ENCODE measurements at regions of chr17 and their contacts with region 1.

Region 1: DNA sequence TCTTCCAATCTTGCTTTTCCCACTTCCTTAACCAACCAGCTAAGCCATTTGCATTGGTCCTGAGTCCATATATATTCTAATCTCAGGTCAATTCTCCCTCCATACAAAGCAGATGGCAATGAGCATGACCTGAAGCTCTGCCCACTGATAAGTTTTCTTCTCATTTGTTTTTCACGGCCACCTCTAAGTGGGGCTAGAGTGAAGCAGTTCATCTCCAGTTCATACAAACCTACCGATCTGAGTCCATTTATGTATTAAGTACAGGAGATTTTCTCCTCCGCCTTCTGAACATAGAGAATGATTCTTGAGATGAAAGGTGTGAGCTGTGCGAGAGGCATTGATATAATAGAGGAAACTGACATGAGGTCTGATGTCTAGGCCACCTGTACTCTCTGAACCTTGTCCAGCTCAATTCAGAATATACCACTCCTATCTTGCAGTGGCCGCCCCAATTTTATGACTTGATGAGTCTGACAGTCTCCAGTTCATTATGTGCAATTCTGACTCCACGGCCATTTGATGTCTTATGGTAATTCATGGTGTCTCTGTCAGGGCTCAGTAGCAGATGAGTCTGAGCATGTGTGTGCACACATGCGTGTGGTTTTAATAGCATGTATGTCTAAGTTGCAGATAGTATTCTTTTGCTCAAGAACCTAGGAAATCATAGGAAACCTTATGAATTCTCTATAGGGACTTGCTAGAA is 329.8 kb downstream of the PMP22 start:
- DNase-seq: no peak
- ATAC-seq: no peak

Region 2: DNA sequence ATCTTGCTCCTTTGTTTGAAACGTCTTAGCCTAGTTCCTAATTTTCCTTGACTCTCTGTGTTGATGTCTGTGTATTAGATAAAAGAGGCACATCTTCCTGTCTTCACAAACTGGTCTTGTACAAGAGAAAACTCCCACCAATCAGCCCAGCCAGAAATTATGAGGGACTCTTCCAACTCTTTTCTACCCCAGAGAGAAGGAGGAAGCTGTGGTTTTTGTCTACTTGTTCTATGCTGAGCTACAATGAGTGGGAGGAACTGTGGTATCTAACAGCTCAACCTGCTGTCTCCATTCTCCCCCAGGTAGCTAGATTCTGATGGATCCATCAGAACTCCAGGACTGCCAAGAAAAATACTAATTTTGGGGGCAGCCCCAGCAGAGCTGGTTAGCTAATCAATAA is 241.9 kb before region 1 on chr17:
- intact Hi-C with region 1: no loop called
- DNase-seq: no peak
- ATAC-seq: no peak

Region 3: DNA sequence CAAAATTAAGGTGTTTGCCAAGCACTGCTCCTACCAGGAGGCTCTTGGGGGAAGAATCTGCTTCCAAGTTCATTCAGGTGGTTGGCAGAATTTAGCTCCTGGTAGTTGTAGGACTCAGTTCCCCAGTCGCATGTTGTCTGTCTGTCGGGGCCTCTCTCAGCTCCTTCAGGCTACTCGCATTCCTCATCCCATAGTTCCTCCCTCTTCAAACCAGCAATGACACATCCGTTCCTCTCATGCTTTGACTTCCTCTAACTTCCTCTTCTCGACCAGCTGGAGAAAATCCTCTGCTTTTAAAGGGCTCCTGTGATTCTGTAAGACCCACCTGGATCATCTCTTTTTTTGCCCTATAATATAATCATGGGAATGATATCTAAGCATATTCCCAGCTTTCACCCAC is 221.8 kb after region 1 on chr17:
- intact Hi-C with region 1: loop called (anchors 10 kb)
- DNase-seq: no peak
- ATAC-seq: peak; percentile 14

Measured in left ventricle myocardium superior (tissue), 1 donor.